ENCODE measurements at regions of chr1 and their contacts with region 1.

Region 1: DNA sequence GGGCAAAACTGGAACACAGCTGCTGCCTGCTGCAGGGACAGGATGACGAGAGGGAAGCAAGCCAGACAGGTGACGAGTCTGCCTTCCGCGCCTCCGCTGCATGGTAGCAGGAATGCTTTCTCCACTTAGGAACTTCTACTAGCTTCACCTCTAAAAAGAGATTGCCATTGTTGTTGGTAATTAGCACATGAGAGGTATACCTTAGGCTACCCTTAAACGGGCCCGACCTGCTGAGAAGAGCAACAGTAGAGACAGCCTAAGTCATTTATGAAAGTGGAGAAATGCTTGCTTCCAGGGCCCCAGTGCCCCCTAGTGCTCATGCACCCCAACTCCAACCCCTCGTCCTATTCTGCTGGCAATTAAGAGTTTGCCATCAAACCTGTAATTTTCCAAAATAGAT is 96.9 kb upstream of the AKT3 start:
- DNase-seq: peak; percentile 61
- ATAC-seq: peak; percentile 77
- H3K4me3 Mint-ChIP-seq: no peak overlapping the region
- H3K27ac Mint-ChIP-seq: no peak overlapping the region
- H3K4me1 Mint-ChIP-seq: no peaks in the 10 kb centered on the region
- H3K27me3 Mint-ChIP-seq: no peaks in the 10 kb centered on the region
- CTCF ChIP-seq: peak; percentile 62

Region 2: GRCh38 chr1:243917177-243917862 is 29.6 kb before region 1 on chr1:
- CTCF ChIA-PET with region 1: no interaction called
- POLR2A ChIA-PET with region 1: no interaction called
- intact Hi-C with region 1: no loop called
- DNase-seq: peak; percentile 35
- ATAC-seq: peak; percentile 61
- H3K4me3 Mint-ChIP-seq: peak overlapping the region; percentile 77
- H3K27ac Mint-ChIP-seq: no peak overlapping the region
- H3K4me1 Mint-ChIP-seq: peaks cover 16% of the 10 kb centered on the region
- H3K27me3 Mint-ChIP-seq: peaks cover 40% of the 10 kb centered on the region
- CTCF ChIP-seq: no peak

Region 3: DNA sequence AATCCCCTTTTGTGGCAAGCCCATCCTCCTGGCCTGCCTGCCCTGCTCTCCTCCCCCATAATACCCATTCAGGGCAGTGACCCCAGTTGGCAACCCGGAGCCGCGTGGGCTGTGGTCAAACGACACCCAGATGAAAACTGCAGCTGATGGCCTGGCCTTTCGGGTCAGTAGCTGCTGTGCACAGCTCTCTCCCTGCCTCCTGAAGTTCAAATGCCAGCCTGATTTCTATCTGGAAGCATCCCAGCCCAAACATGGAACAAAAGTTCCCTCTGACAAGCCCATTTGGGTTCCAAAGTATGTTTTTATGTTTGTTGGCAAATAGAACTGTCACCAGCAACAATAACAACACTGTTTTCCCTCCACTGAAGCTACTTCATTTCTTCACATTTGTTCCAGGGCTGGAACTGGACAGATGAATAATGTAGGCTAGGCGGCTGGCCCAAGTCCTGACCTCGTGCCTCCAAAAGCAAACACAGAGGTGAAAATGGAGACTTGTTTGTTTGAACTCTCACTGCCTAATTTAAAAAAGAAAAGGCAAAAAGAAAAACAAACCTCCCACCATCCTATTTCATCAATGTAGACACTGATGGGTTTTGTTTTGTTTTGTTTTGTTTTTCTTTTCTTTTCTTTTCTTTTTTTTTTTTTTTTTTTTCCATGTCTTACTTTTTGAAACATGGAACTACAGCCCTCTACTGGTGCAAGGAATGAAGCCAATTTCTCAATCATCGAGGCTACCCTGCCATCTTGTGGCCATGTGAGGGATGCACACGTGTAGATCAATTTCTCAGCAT is 325.7 kb after region 1 on chr1:
- CTCF ChIA-PET with region 1: no interaction called
- POLR2A ChIA-PET with region 1: no interaction called
- intact Hi-C with region 1: loop called (anchors 10 kb)
- DNase-seq: peak; percentile 77
- ATAC-seq: peak; percentile 97
- H3K4me3 Mint-ChIP-seq: no peak overlapping the region
- H3K27ac Mint-ChIP-seq: no peak overlapping the region
- H3K4me1 Mint-ChIP-seq: peaks cover 11% of the 10 kb centered on the region
- H3K27me3 Mint-ChIP-seq: peaks cover 3% of the 10 kb centered on the region
- CTCF ChIP-seq: peak; percentile 97